Activated CD4-positive, alpha-beta T cell treated with anti-CD3 and anti-CD28 coated beads for 36 hours (primary cell): ENCODE measurements at regions of chr1 and their contacts with region 1.

Region 1: GRCh38 chr1:200154069-200154767 is 126.7 kb downstream of the NR5A2 start:
- DNase-seq: peak; percentile 63
- ATAC-seq: peak; percentile 82
- H3K4me3 Mint-ChIP-seq: peak overlapping the region; percentile 7
- H3K27ac Mint-ChIP-seq: peak overlapping the region; percentile 84
- H3K4me1 Mint-ChIP-seq: peaks cover 42% of the 10 kb centered on the region
- H3K27me3 Mint-ChIP-seq: no peaks in the 10 kb centered on the region

Region 2: DNA sequence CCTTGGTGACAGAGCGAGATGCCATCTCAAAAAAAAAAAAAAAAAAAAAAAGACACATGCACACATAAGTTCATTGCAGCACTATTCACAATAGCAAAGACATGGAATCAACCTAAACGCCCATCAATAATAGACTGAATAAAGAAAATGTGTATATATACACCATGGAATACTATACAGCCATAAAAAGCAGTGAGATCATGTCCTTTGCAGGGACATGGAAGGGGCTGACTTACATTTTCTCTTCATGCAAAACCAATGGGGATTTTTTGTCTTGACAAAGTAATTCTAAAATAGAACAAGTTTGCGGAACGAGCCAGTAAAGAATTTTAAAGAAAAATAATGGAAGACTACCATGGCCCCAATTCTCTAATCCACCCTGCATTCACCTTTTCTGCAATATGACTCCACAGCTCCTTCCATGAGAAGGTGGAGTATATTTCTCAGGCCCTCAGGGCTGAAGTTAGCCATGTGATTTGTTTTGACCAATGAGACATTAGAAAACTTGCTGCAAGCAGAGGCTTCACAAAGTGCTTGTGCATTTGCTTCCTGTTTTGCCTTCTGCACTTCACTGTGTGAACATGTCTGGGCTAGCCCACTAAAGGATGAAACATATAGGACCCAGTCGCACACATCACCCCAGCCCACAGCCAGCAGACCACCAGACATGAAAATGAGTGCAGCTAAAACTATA is 205.5 kb before region 1 on chr1:
- CTCF ChIA-PET with region 1: no interaction called
- POLR2A ChIA-PET with region 1: no interaction called
- intact Hi-C with region 1: loop called in 1 of 2 experiments (anchors 5 kb)
- DNase-seq: no peak
- ATAC-seq: peak; percentile 44
- H3K4me3 Mint-ChIP-seq: no peak overlapping the region
- H3K27ac Mint-ChIP-seq: no peak overlapping the region
- H3K4me1 Mint-ChIP-seq: no peaks in the 10 kb centered on the region
- H3K27me3 Mint-ChIP-seq: peaks cover 40% of the 10 kb centered on the region

Region 3: GRCh38 chr1:200022239-200022804 is 131.9 kb before region 1 on chr1:
- CTCF ChIA-PET with region 1: no interaction called
- POLR2A ChIA-PET with region 1: no interaction called
- intact Hi-C with region 1: no loop called
- DNase-seq: no peak
- ATAC-seq: no peak
- H3K4me3 Mint-ChIP-seq: no peak overlapping the region
- H3K27ac Mint-ChIP-seq: no peak overlapping the region
- H3K4me1 Mint-ChIP-seq: no peaks in the 10 kb centered on the region
- H3K27me3 Mint-ChIP-seq: peaks cover 24% of the 10 kb centered on the region

Region 4: DNA sequence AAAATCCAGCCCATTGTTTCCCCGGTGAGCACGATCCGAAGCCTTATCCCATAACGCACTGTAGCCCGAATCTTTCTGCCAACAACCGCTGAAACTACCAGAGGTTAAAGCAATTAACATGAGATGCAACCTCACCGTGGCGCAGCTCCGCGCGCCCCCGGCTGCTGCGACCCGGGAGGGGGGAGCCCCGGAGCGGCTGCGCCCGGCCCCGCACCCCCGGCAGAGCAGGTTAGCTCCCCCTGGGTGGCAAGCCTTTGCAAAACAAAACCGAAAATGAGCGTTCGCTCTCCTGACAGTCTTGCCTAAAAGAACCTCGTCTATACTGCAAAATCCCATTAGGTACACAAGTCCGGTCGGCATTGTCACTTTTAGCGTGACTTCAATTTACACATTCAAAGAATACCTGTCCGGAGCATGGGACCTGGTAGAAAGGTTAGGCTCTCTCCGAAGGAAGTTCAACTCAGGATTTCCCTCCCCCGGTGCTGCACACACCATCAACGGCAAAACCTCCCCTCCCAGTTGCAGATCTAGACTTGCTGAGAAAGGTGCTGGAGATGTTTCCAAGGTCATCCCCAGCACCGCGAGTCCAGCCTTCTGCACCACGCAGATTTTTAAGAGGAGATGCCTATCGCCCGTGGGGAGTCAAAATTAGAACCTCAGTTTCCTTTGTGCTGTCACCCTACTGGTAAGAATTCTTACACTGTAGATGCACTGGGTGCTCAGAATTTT is 148.1 kb after region 1 on chr1:
- CTCF ChIA-PET with region 1: no interaction called
- POLR2A ChIA-PET with region 1: no interaction called
- intact Hi-C with region 1: loop called in 1 of 2 experiments (anchors 10 kb)
- DNase-seq: peak; percentile 77
- ATAC-seq: peak; percentile 93
- H3K4me3 Mint-ChIP-seq: peak overlapping the region; percentile 73
- H3K27ac Mint-ChIP-seq: no peak overlapping the region
- H3K4me1 Mint-ChIP-seq: peaks cover 12% of the 10 kb centered on the region
- H3K27me3 Mint-ChIP-seq: no peaks in the 10 kb centered on the region

Region 5: GRCh38 chr1:200409761-200410565 is 255.7 kb after region 1 on chr1 and contains the start of gene ZNF281:
- CTCF ChIA-PET with region 1: no interaction called
- POLR2A ChIA-PET with region 1: no interaction called
- intact Hi-C with region 1: loop called in 1 of 2 experiments (anchors 2 kb)
- DNase-seq: peak; percentile 97
- ATAC-seq: peak; percentile 99
- H3K4me3 Mint-ChIP-seq: peak within 1 kb of the TSS; percentile 80
- H3K27ac Mint-ChIP-seq: peak within 1 kb of the TSS; percentile 93
- H3K4me1 Mint-ChIP-seq: peaks cover 49% of the 10 kb centered on the region
- H3K27me3 Mint-ChIP-seq: no peaks in the 10 kb centered on the region
- total RNA-seq, gene ZNF281: 10.8 to 13.5 TPM

Region 6: DNA sequence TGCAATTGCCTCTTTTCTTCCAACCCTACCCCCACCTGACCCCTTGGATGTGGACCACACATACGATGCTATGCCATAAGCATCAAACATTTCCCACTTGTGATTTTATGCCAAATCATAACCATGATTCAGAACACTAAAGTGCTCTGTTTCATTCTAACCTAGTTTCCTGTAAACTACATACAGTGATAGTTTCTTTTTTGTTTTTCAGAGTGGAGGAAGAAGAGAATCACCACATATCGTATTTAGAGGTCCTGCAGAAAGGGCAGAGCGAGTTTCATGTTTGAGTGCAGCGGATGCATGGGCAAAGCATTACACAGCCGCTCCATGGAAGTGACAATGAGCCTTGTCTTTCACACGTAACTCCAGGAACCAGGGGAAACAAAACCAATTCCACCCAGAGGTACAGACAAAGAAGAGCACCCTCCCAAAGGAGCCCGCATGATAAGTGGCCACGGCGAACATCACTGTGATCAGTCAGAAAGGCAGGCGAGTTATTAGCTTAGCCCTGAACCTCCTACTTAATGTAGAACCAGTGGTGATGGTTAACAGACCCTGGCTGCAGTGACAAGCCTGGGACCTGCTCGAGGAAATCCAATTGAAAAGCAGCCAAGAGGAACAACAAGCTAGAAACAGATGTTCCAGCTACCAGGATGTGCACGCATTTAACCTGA is 319.6 kb after region 1 on chr1:
- CTCF ChIA-PET with region 1: no interaction called
- POLR2A ChIA-PET with region 1: no interaction called
- intact Hi-C with region 1: loop called (anchors 1 to 5 kb)
- DNase-seq: peak; percentile 55
- ATAC-seq: peak; percentile 80
- H3K4me3 Mint-ChIP-seq: peak overlapping the region; percentile 32
- H3K27ac Mint-ChIP-seq: peak overlapping the region; percentile 48
- H3K4me1 Mint-ChIP-seq: peaks cover 47% of the 10 kb centered on the region
- H3K27me3 Mint-ChIP-seq: peaks cover 8% of the 10 kb centered on the region